ENCODE measurements at regions of chr4 and their contacts with region 1.

Region 1: GRCh38 chr4:101169044-101170014 is 178.0 kb downstream of the PPP3CA start:
- DNase-seq: peak; percentile 17
- CTCF ChIP-seq: peak; percentile 55

Region 2: GRCh38 chr4:100674976-100675375 is 494.4 kb before region 1 on chr4:
- in situ Hi-C with region 1: no loop called
- DNase-seq: no peak
- CTCF ChIP-seq: no peak

Region 3: DNA sequence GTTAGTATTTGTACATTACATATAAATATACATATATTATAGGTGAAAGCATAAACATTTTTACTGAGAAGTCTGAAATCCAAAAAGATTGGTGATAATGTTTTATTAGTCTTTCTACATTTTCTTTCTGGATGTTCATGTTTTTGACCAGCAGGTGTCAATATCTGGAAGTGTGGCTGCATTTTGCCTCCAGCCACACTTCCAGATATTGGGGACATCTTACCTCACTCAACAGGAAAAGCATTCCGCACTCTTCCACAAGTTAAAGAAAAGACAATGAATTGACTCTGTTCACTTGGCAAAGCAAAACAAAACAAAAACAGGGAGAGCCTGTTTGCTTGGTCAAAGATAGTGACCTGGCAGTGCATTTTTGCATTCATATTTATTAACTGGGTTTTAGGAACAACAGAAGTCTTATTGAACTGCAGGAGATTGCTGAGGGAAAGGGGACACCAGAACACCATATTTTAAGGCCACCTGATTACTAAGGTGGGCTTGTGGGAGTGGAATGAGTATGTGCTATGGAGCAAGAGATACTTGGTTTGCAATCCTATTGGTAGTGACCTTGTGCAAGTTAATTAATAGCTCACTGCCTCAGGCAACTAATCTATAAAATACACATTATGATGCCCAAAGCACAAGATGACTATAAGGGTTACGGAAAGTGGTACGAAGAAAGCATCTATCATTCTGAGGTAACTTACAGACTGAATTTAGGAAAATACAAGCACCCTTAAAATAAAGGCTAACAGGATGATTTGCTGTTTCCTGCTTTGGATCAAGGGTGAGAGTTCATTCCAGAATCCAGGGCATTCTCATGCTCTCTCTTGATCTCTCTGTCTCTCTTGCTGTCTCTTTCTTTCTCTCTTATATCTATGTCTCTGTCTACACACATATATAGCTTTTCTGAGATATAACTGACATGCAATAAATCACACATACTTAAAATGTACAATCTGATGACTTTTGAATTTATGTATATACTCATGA is 261.6 kb before region 1 on chr4:
- in situ Hi-C with region 1: no loop called
- DNase-seq: no peak
- CTCF ChIP-seq: no peak

Region 4: GRCh38 chr4:101724093-101724492 is 554.8 kb after region 1 on chr4:
- in situ Hi-C with region 1: loop called (anchors 25 kb)
- DNase-seq: no peak
- CTCF ChIP-seq: no peak